ENCODE measurements at regions of chr3 and their contacts with region 1.

Region 1: GRCh38 chr3:47836986-47837385 is 34.0 kb downstream of the DHX30 start:
- DNase-seq: no peak
- ATAC-seq: no peak

Region 2: GRCh38 chr3:47731061-47731460 is 105.9 kb before region 1 on chr3:
- intact Hi-C with region 1: no loop called
- DNase-seq: no peak
- ATAC-seq: no peak

Region 3: DNA sequence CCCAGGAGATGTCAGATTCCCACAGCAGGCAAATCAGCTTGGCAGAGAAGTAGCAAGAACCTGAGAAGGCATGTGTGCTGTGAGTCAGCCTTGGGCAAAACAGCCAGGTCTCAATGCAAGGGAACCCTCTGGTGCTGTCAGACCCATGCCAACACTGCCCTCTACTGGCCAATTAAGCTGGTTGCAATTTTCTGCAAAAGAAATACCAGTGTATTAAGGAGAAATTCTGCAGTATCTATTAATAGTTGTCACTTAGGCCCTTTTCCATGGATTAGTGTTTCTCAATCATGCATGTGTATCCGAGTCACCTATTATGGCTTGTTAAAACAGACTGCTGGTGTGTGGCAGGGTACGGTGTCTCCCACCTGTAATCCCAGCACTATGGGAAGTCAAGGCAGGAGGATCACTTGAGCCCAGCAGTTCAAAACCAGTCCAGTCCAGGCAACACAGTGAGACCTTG is 153.0 kb after region 1 on chr3:
- intact Hi-C with region 1: loop called (anchors 1 kb)
- DNase-seq: peak; percentile 78
- ATAC-seq: peak; percentile 94

Region 4: DNA sequence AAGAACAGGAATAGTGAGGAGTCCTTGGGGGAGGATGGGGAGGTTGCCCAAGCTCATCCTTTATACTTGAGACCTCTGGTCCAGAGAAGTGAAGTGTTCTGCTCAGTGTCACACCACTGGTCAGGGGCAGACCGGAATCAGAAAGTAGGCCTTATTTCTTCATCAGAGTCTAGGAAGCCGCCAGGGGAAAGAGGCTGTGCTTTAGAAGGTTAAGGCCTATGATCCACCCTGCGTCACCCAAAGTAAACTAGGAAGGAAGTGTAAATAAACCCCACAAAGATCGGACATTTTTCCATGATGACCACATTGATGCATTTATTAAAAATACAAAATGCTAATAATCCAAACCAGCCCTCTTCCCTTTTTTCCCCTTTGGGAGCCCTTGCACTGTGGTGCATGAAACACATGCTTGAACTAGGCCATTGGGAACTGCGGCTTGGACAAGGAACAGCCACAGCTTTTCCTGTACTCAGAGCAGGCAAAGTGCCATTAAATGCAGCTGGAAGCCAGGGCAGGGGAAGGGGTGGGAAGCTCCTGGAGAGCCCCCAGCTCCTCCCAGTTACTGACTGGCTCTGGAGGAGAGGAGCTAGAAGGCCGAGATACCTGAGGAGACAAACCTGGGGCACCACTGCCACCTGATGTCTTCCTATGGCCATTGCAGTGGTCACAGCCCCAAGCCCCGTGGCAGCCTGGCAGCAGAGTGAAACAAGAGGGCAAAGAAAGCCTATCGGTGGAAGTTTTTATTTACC is 314.2 kb after region 1 on chr3:
- intact Hi-C with region 1: loop called (anchors 2 kb)
- DNase-seq: peak; percentile 79
- ATAC-seq: peak; percentile 97

Region 5: GRCh38 chr3:48157950-48158376 is 321.0 kb after region 1 on chr3:
- intact Hi-C with region 1: loop called (anchors 1 kb)
- DNase-seq: no peak
- ATAC-seq: peak; percentile 73

Region 6: DNA sequence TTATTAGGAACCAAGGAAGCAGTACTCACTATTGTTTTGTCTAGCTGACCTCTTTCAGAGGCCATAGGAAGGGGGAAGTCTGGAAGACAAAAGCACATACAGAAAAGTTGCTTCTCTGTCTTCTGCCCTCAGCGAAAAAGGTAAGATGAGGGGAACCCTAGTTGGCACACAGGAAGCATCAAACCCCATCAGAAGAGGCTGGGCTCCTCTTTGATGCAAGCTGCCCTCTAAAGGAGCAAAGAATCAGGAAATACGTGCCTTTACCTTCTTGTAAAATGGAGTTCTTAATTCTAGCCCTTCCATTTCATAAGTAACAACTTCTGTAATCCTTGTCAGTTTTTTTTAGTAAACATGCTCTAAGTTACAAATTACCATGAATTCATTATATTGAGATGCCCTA is 484.0 kb after region 1 on chr3:
- intact Hi-C with region 1: no loop called
- DNase-seq: no peak
- ATAC-seq: no peak

Measured in Right ventricle myocardium inferior (tissue), 1 donor.